Calu3 (cell line): ENCODE measurements at regions of chr20 and their contacts with region 1.

Region 1: DNA sequence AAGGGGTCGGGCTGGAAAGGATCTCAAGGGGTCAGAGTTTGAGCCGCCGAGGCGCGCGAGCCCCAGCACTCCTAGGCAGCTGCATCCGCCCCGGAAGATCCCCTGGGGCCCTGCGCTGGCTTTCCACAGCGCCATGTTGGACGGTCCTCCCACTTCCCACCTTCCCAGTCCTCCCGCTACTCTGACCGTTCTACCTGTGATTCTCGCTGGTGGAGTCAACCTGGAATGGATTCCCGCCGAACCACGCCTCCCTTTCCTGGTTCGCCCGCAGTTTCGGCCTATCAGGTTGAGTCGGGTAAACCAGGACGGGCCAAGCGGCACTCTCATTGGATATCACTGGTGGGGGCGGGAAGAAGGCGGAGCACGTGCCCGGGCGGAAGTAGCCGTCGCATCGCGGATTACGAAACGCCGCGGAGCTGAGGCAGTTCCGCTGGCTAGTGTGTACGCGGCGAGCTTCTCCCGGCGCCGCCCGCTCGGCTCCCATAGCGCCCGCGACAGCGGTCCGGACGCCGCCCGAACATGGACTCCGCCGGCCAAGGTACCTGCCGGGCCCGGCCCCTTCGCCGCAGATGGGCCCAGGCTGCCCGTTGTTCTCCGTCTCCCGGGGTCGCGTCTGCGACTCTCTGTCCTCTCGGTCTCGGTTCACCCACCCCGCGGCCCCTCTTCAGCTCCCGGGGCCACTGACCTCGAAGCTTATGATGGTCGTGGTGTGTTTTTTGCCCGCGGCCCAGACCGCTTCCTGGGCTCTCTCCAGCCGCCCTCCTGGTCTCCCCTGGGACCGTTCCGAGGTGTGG is at the start of gene TPD52L2:
- DNase-seq: peak; percentile 100
- H3K4me3 Mint-ChIP-seq: peak within 1 kb of the TSS; percentile 100
- H3K27ac Mint-ChIP-seq: peak within 1 kb of the TSS; percentile 92
- H3K4me1 Mint-ChIP-seq: peaks cover 19% of the 10 kb centered on the region
- H3K27me3 Mint-ChIP-seq: no peaks in the 10 kb centered on the region
- CTCF ChIP-seq: no peak
- total RNA-seq, gene TPD52L2: 192 and 197 TPM in 2 replicates

Region 2: GRCh38 chr20:63707549-63708300 is 157.3 kb before region 1 on chr20 and contains the starts of genes ARFRP1 and ZGPAT:
- CTCF ChIA-PET with region 1: interaction called, 10 read pairs
- intact Hi-C with region 1: loop called (anchors 10 kb)
- DNase-seq: peak; percentile 96
- H3K4me3 Mint-ChIP-seq: peak within 1 kb of the TSS; percentile 97
- H3K27ac Mint-ChIP-seq: peak within 1 kb of the TSS; percentile 85
- H3K4me1 Mint-ChIP-seq: peaks cover 42% of the 10 kb centered on the region
- H3K27me3 Mint-ChIP-seq: no peaks in the 10 kb centered on the region
- CTCF ChIP-seq: no peak
- total RNA-seq, gene ARFRP1: 74.0 and 85.1 TPM in 2 replicates
- total RNA-seq, gene ZGPAT: 47.0 and 48.4 TPM in 2 replicates

Region 3: GRCh38 chr20:63740627-63741354 is 124.3 kb before region 1 on chr20:
- CTCF ChIA-PET with region 1: interaction called, 10 read pairs
- intact Hi-C with region 1: no loop called
- DNase-seq: peak; percentile 98
- H3K4me3 Mint-ChIP-seq: peak overlapping the region; percentile 72
- H3K27ac Mint-ChIP-seq: peak overlapping the region; percentile 64
- H3K4me1 Mint-ChIP-seq: no peaks in the 10 kb centered on the region
- H3K27me3 Mint-ChIP-seq: no peaks in the 10 kb centered on the region
- CTCF ChIP-seq: peak; percentile 38

Region 4: GRCh38 chr20:63785691-63786131 is 79.3 kb before region 1 on chr20:
- CTCF ChIA-PET with region 1: interaction called, 7 read pairs
- intact Hi-C with region 1: loop called (anchors 2 kb)
- DNase-seq: no peak
- H3K4me3 Mint-ChIP-seq: no peak overlapping the region
- H3K27ac Mint-ChIP-seq: no peak overlapping the region
- H3K4me1 Mint-ChIP-seq: no peaks in the 10 kb centered on the region
- H3K27me3 Mint-ChIP-seq: peaks cover 15% of the 10 kb centered on the region
- CTCF ChIP-seq: no peak